CD4-positive, alpha-beta T cell (primary cell): ENCODE measurements at regions of chr14 and their contacts with region 1.

Region 1: GRCh38 chr14:34614638-34615037 is 15.3 kb downstream of the SNX6 start:
- DNase-seq: peak in 1 of 14 experiments; percentile 10
- ATAC-seq: no peak
- H3K4me3 ChIP-seq: no peak overlapping the region
- H3K4me3 Mint-ChIP-seq: no peak overlapping the region
- H3K27ac ChIP-seq: no peak overlapping the region
- H3K27ac Mint-ChIP-seq: peak overlapping the region; percentile 25
- H3K4me1 ChIP-seq: peaks cover 22% of the 10 kb centered on the region
- H3K4me1 Mint-ChIP-seq: peaks cover 27% of the 10 kb centered on the region
- H3K27me3 ChIP-seq: no peaks in the 10 kb centered on the region
- H3K27me3 Mint-ChIP-seq: no peaks in the 10 kb centered on the region
- CTCF ChIP-seq: no peak

Region 2: GRCh38 chr14:34593740-34594375 is 20.8 kb before region 1 on chr14:
- CTCF ChIA-PET with region 1: no interaction called
- POLR2A ChIA-PET with region 1: no interaction called
- intact Hi-C with region 1: loop called in 1 of 2 experiments (anchors 2 kb)
- DNase-seq: no peak
- ATAC-seq: no peak
- H3K4me3 ChIP-seq: no peak overlapping the region
- H3K4me3 Mint-ChIP-seq: no peak overlapping the region
- H3K27ac ChIP-seq: no peak overlapping the region
- H3K27ac Mint-ChIP-seq: no peak overlapping the region
- H3K4me1 ChIP-seq: no peaks in the 10 kb centered on the region
- H3K4me1 Mint-ChIP-seq: peaks cover 3% of the 10 kb centered on the region
- H3K27me3 ChIP-seq: no peaks in the 10 kb centered on the region
- H3K27me3 Mint-ChIP-seq: no peaks in the 10 kb centered on the region
- CTCF ChIP-seq: no peak

Region 3: GRCh38 chr14:35915185-35915584 is 1300.5 kb after region 1 on chr14:
- CTCF ChIA-PET with region 1: no interaction called
- POLR2A ChIA-PET with region 1: no interaction called
- intact Hi-C with region 1: no loop called
- DNase-seq: no peak
- ATAC-seq: no peak
- H3K4me3 ChIP-seq: no peak overlapping the region
- H3K4me3 Mint-ChIP-seq: no peak overlapping the region
- H3K27ac ChIP-seq: no peak overlapping the region
- H3K27ac Mint-ChIP-seq: no peak overlapping the region
- H3K4me1 ChIP-seq: no peaks in the 10 kb centered on the region
- H3K4me1 Mint-ChIP-seq: no peaks in the 10 kb centered on the region
- H3K27me3 ChIP-seq: no peaks in the 10 kb centered on the region
- H3K27me3 Mint-ChIP-seq: peaks cover 8% of the 10 kb centered on the region
- CTCF ChIP-seq: no peak